Aorta (tissue), 5 donors: ENCODE measurements at regions of chr20 and their contacts with region 1.

Region 1: GRCh38 chr20:2470423-2471193 is at the start of gene SNRPB:
- DNase-seq: peak; percentile 98
- ATAC-seq: peak; percentile 99
- H3K4me3 ChIP-seq: peak within 1 kb of the TSS; percentile 53 to 75
- H3K27ac ChIP-seq: peak within 1 kb of the TSS; percentile 64 to 98
- H3K4me1 ChIP-seq: no peaks in the 10 kb centered on the region
- H3K27me3 ChIP-seq: no peaks in the 10 kb centered on the region
- total RNA-seq, gene SNRPB: 84.2 to 89.8 TPM

Region 2: GRCh38 chr20:1118336-1119127 is 1352.1 kb before region 1 on chr20 and contains the start of gene PSMF1:
- intact Hi-C with region 1: loop called in 1 of 2 experiments (anchors 10 kb)
- DNase-seq: peak; percentile 97 to 98
- ATAC-seq: peak; percentile 99
- H3K4me3 ChIP-seq: peak within 1 kb of the TSS; percentile 59 to 73
- H3K27ac ChIP-seq: no peak within 1 kb of the TSS
- H3K4me1 ChIP-seq: no peaks in the 10 kb centered on the region
- H3K27me3 ChIP-seq: no peaks in the 10 kb centered on the region
- total RNA-seq, gene PSMF1: 96.9 to 105 TPM

Region 3: GRCh38 chr20:2508631-2509467 is 38.2 kb after region 1 on chr20 and contains the start of gene ZNF343:
- intact Hi-C with region 1: loop called (anchors 5 kb)
- DNase-seq: peak; percentile 87 to 91
- ATAC-seq: peak; percentile 98
- H3K4me3 ChIP-seq: peak within 1 kb of the TSS; percentile 79 to 88
- H3K27ac ChIP-seq: peak within 1 kb of the TSS in 1 of 2 donors; percentile 84
- H3K4me1 ChIP-seq: peaks cover 0 to 4% of the 10 kb centered on the region in 2 donors
- H3K27me3 ChIP-seq: no peaks in the 10 kb centered on the region
- total RNA-seq, gene ZNF343: 13.9 to 15.0 TPM

Region 4: GRCh38 chr20:2544211-2544610 is 73.6 kb after region 1 on chr20:
- intact Hi-C with region 1: no loop called
- DNase-seq: no peak
- ATAC-seq: no peak
- H3K4me3 ChIP-seq: no peak overlapping the region
- H3K27ac ChIP-seq: no peak overlapping the region
- H3K4me1 ChIP-seq: no peaks in the 10 kb centered on the region
- H3K27me3 ChIP-seq: no peaks in the 10 kb centered on the region

Region 5: DNA sequence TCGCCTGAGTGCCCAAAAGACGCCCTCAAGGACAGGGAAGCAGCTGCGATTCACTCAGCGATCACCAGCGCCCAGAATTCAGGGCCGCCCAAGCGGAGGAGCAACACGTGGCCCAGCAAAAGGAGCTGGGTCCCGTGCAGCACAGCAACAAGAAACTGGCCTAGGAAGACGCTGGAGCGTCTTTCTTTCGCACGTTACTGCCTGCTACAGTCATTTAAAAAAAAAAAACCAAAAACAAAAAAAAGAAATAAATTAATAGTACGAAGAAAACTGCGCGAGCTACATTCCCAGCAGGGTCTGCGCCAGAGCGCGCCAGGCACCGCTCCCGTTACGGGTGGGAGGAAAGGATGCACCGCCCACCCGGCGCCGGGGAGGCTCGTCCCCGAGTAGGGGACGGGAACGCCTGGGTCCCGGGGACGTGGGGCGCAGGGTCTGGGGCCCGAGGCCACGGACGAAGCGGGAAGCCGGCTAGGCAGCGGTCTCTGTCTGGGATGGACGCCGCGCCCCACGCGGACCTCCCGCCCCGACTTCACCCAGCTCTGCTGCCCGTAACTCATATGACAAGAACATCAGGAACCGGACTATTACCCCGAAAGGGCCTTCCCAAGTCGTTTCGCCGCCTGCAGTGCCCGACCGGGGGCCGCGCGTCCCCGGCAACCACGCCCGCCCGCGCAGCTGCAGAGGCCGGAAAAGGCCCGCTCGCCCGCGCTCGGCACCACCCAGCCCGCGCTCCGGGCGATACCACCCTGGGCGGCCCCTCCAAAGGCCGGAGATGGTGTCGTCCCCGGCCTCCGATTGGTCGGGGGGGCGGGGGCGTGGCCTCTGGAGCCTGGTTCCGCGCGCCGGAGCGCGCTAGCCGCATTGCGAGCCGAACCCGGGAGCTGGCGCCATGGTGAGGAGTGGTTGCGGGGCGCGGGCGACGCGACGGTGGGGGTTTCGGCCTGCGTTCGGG is 181.4 kb after region 1 on chr20 and contains the start of gene NOP56:
- intact Hi-C with region 1: loop called in 1 of 2 experiments (anchors 10 kb)
- DNase-seq: peak; percentile 94 to 96
- ATAC-seq: peak; percentile 98
- H3K4me3 ChIP-seq: peak within 1 kb of the TSS; percentile 88 to 91
- H3K27ac ChIP-seq: peak within 1 kb of the TSS; percentile 91 to 92
- H3K4me1 ChIP-seq: no peaks in the 10 kb centered on the region
- H3K27me3 ChIP-seq: peaks cover 0 to 2% of the 10 kb centered on the region in 2 donors
- total RNA-seq, gene NOP56: 81.6 to 88.3 TPM